Activated naive CD4-positive, alpha-beta T cell treated with anti-CD3 and anti-CD28 coated beads, Interleukin-2, amount 10 ng/mL, durations not matched to agents 7 days and 5 days (primary cell): ENCODE measurements at regions of chr14 and their contacts with region 1.

Region 1: GRCh38 chr14:22872033-22872832 is 693 bp downstream of the LRP10 start:
- DNase-seq: peak; percentile 82
- H3K4me3 Mint-ChIP-seq: peak overlapping the region; percentile 95
- H3K27ac Mint-ChIP-seq: peak overlapping the region; percentile 97
- H3K4me1 Mint-ChIP-seq: peaks cover 37% of the 10 kb centered on the region
- H3K27me3 Mint-ChIP-seq: no peaks in the 10 kb centered on the region

Region 2: DNA sequence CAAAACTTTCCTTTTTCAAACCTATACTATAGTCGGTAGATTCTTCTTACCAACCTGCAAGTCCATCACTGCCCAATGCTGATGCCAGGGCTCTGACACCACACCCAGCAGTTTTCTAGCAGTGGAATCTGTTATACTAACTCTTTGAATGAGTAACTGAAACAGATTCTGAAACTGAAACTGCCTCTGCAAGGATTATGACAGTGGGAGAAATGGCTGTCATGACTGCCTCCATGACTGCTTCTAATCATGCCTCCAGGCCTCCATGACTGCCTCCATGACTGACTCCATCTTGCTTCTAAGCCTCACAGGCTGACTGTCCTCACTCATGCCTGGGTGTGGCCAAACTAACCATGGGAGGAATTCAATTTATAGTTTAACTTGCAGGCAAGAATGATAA is 135.2 kb before region 1 on chr14:
- CTCF ChIA-PET with region 1: no interaction called
- DNase-seq: peak; percentile 56
- H3K4me3 Mint-ChIP-seq: no peak overlapping the region
- H3K27ac Mint-ChIP-seq: peak overlapping the region; percentile 85
- H3K4me1 Mint-ChIP-seq: peaks cover 32% of the 10 kb centered on the region
- H3K27me3 Mint-ChIP-seq: peaks cover 7% of the 10 kb centered on the region

Region 3: GRCh38 chr14:22781586-22781991 is 90.6 kb before region 1 on chr14:
- CTCF ChIA-PET with region 1: no interaction called
- DNase-seq: no peak
- H3K4me3 Mint-ChIP-seq: no peak overlapping the region
- H3K27ac Mint-ChIP-seq: no peak overlapping the region
- H3K4me1 Mint-ChIP-seq: no peaks in the 10 kb centered on the region
- H3K27me3 Mint-ChIP-seq: no peaks in the 10 kb centered on the region

Region 4: GRCh38 chr14:22886500-22887259 is 14.4 kb after region 1 on chr14:
- CTCF ChIA-PET with region 1: interaction called, 115 read pairs
- DNase-seq: peak; percentile 86
- H3K4me3 Mint-ChIP-seq: peak overlapping the region; percentile 87
- H3K27ac Mint-ChIP-seq: peak overlapping the region; percentile 95
- H3K4me1 Mint-ChIP-seq: peaks cover 53% of the 10 kb centered on the region
- H3K27me3 Mint-ChIP-seq: peaks cover 47% of the 10 kb centered on the region

Region 5: DNA sequence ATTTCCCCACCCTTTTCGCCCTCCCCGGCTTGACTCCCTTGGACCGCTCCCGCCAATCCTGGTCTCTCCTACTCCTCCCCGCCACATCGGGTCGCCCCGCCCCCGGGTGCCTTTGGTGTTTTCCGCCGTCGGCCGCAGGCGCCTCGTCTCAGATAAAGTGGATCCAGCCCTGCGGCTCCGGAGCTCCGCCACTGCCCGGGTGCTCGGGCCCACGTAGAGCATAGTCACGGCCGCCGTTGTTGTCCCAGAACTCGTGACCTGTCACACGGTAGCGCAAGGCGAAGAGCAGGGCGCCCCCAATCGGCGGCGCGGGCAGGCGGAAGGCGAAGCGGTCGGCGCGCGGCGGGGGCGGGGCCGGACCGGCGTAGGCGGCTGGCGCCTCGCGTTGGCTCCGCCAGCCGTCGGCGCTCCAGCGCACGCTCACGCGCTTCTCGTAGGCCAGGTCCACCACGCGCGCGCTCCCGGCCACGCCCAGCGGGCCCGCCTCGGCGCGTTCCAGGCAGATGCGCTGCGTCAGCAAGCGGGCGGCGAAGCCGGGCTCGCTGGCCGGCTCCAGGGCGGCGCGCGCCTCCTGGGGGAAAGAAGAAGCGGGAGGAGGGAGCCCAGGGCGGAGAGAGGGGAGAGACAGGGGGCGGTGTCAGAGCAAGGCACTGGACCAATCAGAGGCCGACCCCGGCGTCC is 429.2 kb after region 1 on chr14:
- CTCF ChIA-PET with region 1: no interaction called
- DNase-seq: peak; percentile 97
- H3K4me3 Mint-ChIP-seq: peak overlapping the region; percentile 97
- H3K27ac Mint-ChIP-seq: peak overlapping the region; percentile 100
- H3K4me1 Mint-ChIP-seq: peaks cover 36% of the 10 kb centered on the region
- H3K27me3 Mint-ChIP-seq: peaks cover 26% of the 10 kb centered on the region